ENCODE measurements at regions of chr2 and their contacts with region 1.

Region 1: DNA sequence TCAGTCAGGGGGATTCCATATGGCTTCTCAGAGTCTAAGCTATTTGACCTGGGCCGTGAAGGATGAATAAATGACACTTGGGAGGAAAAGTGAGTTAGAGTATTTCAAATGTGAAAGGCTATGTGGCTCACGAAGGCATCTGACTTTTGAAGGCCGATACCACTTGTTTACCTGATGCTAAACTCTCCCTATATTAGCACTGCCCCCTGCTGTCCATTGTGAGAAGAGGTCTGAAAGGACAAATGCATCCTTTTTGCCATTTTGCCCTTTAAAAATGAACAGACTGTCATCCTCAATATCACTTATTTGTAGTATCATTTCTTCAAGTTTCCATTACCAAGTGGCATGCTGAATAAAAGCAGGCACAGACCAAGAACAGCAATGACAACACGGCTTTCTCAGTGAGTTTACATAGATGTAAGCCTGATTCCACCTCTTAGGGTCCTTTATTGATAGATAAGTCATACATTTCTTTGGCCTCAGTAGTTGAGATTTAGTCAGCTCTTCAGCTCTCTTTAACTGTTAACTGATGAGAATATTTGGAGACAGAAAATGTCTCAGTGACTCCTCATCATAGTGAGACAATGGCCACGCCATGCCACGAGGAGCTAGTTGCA is 40.1 kb downstream of the DOCK10 start:
- DNase-seq: no peak
- H3K4me3 ChIP-seq: no peak overlapping the region
- CTCF ChIP-seq: peak; percentile 57

Region 2: DNA sequence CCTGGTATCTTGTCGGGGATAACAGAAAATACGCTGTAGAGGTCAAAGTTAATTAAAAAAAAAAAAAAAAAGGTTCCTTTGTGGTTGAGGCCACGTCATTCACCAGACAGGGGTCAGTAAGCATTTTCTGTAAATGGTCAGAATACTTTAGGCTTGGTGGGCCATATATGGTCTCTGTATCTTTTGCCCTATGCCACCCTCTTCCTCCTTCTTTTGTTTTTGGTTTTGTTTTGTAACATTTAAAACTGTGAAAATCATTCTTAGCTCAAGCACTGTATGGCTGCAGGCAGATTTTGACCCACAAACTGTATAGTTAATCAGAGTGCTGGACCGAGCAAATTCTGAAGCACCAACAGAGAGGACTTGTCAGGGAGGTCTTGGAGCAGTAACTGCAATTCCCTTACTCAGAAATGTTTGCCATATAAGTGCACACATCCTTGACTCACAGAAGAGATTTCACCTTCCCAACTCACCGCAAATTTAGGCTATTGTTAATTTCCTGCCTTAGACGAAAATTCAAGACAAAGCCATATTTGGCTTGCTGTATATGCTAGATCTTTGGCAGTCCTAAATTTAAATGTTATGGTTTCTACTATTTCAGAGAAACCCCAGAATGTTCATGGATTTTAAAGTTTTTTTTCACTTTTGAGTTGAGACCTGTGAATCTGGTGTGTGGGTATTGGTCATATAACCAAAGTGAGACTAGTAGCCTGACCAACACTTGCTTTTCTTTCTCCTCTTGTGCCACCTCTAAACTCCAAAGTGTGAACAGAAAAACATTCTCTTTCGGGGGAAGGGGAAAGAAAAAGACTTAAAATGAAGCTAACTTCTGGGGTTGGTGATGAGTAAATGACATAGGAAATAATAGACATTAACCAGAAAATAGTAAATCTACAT is 25.3 kb before region 1 on chr2:
- CTCF ChIA-PET with region 1: interaction called, 136 read pairs
- POLR2A ChIA-PET with region 1: no interaction called
- DNase-seq: no peak
- H3K4me3 ChIP-seq: no peak overlapping the region
- CTCF ChIP-seq: no peak

Region 3: DNA sequence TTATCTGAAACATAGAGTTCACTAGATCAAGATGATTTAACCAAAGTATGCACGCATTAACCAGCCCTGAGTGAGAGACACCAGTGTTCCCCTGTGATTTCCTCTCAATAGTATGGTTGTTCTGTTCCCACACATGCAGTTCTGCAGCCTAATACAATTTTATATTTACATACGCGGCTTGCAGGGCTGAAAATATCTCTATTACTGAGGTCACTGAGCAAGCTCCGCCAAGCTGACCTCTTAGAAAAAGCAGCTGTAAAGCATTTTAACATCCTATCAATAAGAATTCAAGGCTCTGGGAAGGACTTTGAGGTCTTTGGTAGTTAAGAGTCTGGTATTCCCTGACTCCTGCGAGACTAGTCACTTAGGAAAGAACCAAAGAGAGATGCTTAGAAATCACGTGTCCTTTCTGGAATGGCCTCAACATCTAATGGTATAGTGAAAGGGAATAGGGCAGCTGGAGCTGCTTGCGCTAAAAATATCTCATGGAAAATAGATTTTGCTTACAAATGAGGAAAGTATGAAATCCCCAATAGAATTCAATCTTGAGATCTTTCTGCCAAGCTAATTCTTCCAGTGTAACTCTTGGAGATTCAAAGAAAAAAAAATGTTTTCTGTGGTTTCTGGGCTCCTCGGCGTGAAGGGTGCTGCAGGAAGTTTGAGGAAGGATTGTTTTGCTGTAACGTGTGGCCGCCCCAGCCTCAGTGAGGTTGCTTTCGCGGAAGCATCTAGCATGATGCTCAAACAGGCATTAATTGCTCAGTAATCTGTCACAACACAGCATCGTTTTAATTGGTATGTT is 19.0 kb before region 1 on chr2:
- CTCF ChIA-PET with region 1: interaction called, 136 read pairs
- POLR2A ChIA-PET with region 1: no interaction called
- DNase-seq: peak; percentile 76
- H3K4me3 ChIP-seq: peak overlapping the region; percentile 47
- CTCF ChIP-seq: no peak

Region 4: GRCh38 chr2:225013425-225014365 is 11.5 kb after region 1 on chr2:
- CTCF ChIA-PET with region 1: interaction called, 18 read pairs
- POLR2A ChIA-PET with region 1: no interaction called
- DNase-seq: no peak
- H3K4me3 ChIP-seq: no peak overlapping the region
- CTCF ChIP-seq: no peak

Region 5: GRCh38 chr2:225020168-225020849 is 18.2 kb after region 1 on chr2:
- CTCF ChIA-PET with region 1: interaction called, 15 read pairs
- POLR2A ChIA-PET with region 1: no interaction called
- DNase-seq: no peak
- H3K4me3 ChIP-seq: no peak overlapping the region
- CTCF ChIP-seq: no peak

Region 6: DNA sequence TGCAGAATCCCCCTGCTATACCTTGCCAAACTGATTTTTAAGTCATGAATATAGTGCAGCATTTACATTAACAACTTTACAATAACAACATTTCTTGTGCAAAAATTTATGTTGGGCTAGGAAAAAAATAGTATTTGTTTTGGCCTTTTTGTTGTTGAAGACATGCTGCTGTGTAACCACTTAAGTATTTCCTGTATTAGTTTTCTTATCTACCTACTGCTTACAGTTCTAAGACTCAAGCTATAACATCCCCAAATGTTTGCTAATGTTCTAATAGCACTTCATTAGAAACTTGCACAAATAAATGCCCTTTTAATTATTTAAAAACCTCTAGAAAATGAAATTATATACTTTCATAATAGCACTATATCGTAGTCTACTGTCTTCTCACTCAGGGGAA is 194.4 kb after region 1 on chr2:
- CTCF ChIA-PET with region 1: no interaction called
- POLR2A ChIA-PET with region 1: no interaction called
- DNase-seq: no peak
- H3K4me3 ChIP-seq: no peak overlapping the region
- CTCF ChIP-seq: no peak